ENCODE measurements at regions of chr2 and their contacts with region 1.

Region 1: GRCh38 chr2:26846328-26847306 is 1.3 kb upstream of the DPYSL5 start:
- DNase-seq: peak; percentile 80 to 90
- ATAC-seq: peak; percentile 71 to 82
- H3K4me3 ChIP-seq: no peak overlapping the region
- H3K27ac ChIP-seq: peak overlapping the region in 1 of 2 experiments; percentile 59; a peak in 2 of 6 replicates
- H3K4me1 ChIP-seq: peaks cover 12% of the 10 kb centered on the region; the same call in 2 of the 3 replicates
- CTCF ChIP-seq: peak; percentile 97
- EP300 ChIP-seq: no peak
- POLR2A ChIP-seq: no peak
- RAD21 ChIP-seq: peak; percentile 96 to 97

Region 2: GRCh38 chr2:26223018-26223417 is 623.6 kb before region 1 on chr2:
- CTCF ChIA-PET with region 1: no interaction called
- POLR2A ChIA-PET with region 1: no interaction called
- DNase-seq: no peak
- ATAC-seq: no peak
- H3K4me3 ChIP-seq: no peak overlapping the region
- H3K27ac ChIP-seq: no peak overlapping the region
- H3K4me1 ChIP-seq: no peaks in the 10 kb centered on the region
- CTCF ChIP-seq: no peak
- EP300 ChIP-seq: no peak
- POLR2A ChIP-seq: no peak
- RAD21 ChIP-seq: no peak

Region 3: DNA sequence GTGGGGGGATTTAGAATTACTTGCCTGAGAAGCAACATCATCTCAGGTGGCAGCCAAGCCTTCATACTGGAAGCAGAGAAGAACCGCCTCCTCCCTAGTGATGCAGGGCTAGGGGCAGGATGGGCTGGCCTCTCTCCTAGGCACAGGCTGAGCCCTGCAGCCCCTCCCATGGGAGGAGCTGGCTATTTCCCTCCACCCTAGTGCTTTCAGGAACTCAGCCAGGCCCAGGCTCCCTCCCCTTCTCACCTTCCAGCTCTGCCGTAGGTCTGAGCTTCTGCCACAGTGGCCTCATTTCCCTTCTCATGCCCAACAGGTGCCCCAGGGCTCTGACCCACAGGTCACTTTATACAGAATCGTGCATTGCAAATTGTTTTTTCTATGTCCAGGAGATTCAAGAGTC is 29.7 kb before region 1 on chr2:
- CTCF ChIA-PET with region 1: interaction called, 17 read pairs
- POLR2A ChIA-PET with region 1: no interaction called
- DNase-seq: no peak
- ATAC-seq: peak; percentile 33 to 61; a peak in 3 of 6 replicates
- H3K4me3 ChIP-seq: no peak overlapping the region
- H3K27ac ChIP-seq: no peak overlapping the region
- H3K4me1 ChIP-seq: no peaks in the 10 kb centered on the region
- CTCF ChIP-seq: no peak
- EP300 ChIP-seq: no peak
- POLR2A ChIP-seq: no peak
- RAD21 ChIP-seq: no peak

Region 4: GRCh38 chr2:26883956-26884355 is 37.3 kb after region 1 on chr2:
- CTCF ChIA-PET with region 1: interaction called, 23 read pairs
- POLR2A ChIA-PET with region 1: no interaction called
- DNase-seq: no peak
- ATAC-seq: peak in 1 of 2 experiments; percentile 22; a peak in 2 of 6 replicates
- H3K4me3 ChIP-seq: no peak overlapping the region
- H3K27ac ChIP-seq: no peak overlapping the region
- H3K4me1 ChIP-seq: no peaks in the 10 kb centered on the region
- CTCF ChIP-seq: no peak
- EP300 ChIP-seq: no peak
- POLR2A ChIP-seq: no peak
- RAD21 ChIP-seq: no peak

Region 5: GRCh38 chr2:26922405-26923188 is 76.0 kb after region 1 on chr2:
- CTCF ChIA-PET with region 1: interaction called, 146 read pairs
- POLR2A ChIA-PET with region 1: interaction called, 5 read pairs
- DNase-seq: peak; percentile 68 to 93
- ATAC-seq: peak; percentile 93 to 99
- H3K4me3 ChIP-seq: no peak overlapping the region
- H3K27ac ChIP-seq: no peak overlapping the region
- H3K4me1 ChIP-seq: peaks cover 7% of the 10 kb centered on the region; the same call in 1 of the 3 replicates
- CTCF ChIP-seq: peak; percentile 65
- EP300 ChIP-seq: no peak
- POLR2A ChIP-seq: no peak
- RAD21 ChIP-seq: peak; percentile 62 to 69

Region 6: DNA sequence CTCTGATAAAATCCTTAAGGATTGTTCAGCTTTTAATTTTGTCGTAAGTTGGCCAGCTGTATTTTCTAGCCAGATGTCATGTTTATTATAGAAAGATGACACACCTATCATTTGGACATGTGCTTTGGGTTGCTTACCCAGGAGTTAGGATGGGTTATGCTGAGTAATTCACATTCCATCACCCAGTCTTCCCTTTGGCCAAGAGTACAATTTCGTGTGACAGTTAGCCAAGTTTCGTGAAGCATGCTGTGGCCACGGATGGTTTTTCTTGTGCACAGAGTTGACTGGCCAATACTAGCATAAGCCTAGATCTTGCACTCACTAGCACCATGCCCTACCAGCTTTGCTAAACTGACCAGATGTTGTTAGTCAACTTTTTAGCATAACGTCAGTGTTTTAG is 129.6 kb after region 1 on chr2:
- CTCF ChIA-PET with region 1: interaction called, 11 read pairs
- POLR2A ChIA-PET with region 1: no interaction called
- DNase-seq: no peak
- ATAC-seq: no peak
- H3K4me3 ChIP-seq: no peak overlapping the region
- H3K27ac ChIP-seq: no peak overlapping the region
- H3K4me1 ChIP-seq: peaks cover 7% of the 10 kb centered on the region; the same call in 2 of the 3 replicates
- CTCF ChIP-seq: no peak
- EP300 ChIP-seq: no peak
- POLR2A ChIP-seq: no peak
- RAD21 ChIP-seq: no peak

Region 7: DNA sequence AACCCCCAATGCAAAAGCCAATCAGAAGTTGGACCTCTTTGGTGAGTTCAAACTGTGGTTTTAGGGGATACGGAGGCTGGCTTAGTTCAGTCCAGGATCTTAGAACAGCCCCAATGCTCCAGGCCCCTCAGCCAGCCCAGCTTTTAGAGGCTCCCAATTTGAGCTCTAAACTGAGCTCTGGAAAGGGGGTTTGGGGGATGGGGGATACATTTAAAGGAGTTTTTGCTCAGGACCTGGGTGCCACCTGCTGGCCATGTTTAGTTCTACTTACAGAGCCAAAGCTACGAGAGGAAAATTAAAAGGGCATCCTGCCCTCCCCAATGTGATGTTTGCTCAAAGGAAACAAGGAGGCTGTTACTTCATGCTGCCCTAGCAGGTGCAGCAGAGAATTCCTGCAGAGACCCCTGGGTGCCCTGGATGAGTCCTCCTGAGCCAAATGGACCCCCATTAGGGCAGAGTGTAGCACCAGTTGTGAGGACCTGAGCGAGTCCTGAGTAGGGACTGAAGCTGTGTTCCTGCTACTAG is 170.2 kb after region 1 on chr2:
- CTCF ChIA-PET with region 1: interaction called, 175 read pairs
- POLR2A ChIA-PET with region 1: interaction called, 4 read pairs
- DNase-seq: peak; percentile 79 to 81
- ATAC-seq: peak; percentile 54 to 77; a peak in 4 of 6 replicates
- H3K4me3 ChIP-seq: no peak overlapping the region
- H3K27ac ChIP-seq: peak overlapping the region; percentile 77 to 86
- H3K4me1 ChIP-seq: peaks cover 40% of the 10 kb centered on the region
- CTCF ChIP-seq: peak; percentile 96
- EP300 ChIP-seq: no peak
- POLR2A ChIP-seq: no peak
- RAD21 ChIP-seq: peak; percentile 97 to 98

Region 8: DNA sequence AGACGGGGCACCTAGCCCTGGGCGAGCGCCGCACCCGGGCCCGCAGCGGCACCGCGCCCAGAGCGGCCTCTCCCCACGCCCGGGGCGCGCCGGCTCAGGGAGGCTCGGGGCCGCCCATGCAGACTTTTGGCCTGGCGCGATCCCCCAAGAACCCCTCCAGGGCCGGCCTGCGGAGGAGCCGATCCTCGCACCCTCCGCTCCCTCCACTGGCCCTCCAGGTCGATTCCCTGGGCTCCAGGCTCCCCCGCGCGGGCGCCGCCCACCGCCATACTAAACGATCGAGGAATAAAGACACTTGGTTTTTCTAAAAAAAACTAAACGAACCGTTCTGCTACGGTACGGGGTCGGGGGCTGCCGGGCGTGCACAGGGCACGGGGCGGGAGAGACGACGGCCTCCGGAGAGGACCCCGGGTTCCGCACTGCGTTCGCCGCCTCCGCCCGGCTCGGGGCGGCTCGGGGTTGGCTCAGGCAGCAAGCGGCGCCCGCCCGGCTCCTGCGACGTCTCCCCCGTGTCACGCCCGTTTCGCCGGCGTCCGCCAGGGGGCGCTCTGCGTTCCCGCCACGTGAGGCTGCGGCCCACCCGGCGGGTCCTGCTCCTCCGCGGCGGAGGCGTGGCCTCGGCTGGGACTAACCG is 239.6 kb after region 1 on chr2:
- CTCF ChIA-PET with region 1: interaction called, 21 read pairs
- POLR2A ChIA-PET with region 1: interaction called, 4 read pairs
- DNase-seq: peak; percentile 95 to 97
- ATAC-seq: peak; percentile 73 to 89
- H3K4me3 ChIP-seq: peak overlapping the region; percentile 70
- H3K27ac ChIP-seq: peak overlapping the region; percentile 90 to 91
- H3K4me1 ChIP-seq: peaks cover 17% of the 10 kb centered on the region
- CTCF ChIP-seq: peak; percentile 98
- EP300 ChIP-seq: no peak
- POLR2A ChIP-seq: peak; percentile 41; the same call in 1 of the 2 replicates
- RAD21 ChIP-seq: peak; percentile 31 to 63; a peak in 4 of 5 replicates